ENCODE measurements at regions of chr12 and their contacts with region 1.

Region 1: GRCh38 chr12:108950991-108951739 is 69.7 kb downstream of the SVOP start:
- DNase-seq: peak; percentile 85
- H3K4me3 ChIP-seq: no peak overlapping the region
- H3K27ac ChIP-seq: no peak overlapping the region
- H3K4me1 ChIP-seq: peaks cover 0 to 9% (median 1%) of the 10 kb centered on the region in 4 donors
- H3K27me3 ChIP-seq: no peaks in the 10 kb centered on the region
- CTCF ChIP-seq: peak; percentile 81 to 92 (median 84)
- EP300 ChIP-seq: no peak
- POLR2A ChIP-seq: no peak

Region 2: GRCh38 chr12:108618079-108618952 is 332.8 kb before region 1 on chr12:
- intact Hi-C with region 1: loop called (anchors 5 kb)
- DNase-seq: peak; percentile 90
- H3K4me3 ChIP-seq: no peak overlapping the region
- H3K27ac ChIP-seq: no peak overlapping the region
- H3K4me1 ChIP-seq: peaks cover 0 to 12% (median 8%) of the 10 kb centered on the region in 4 donors
- H3K27me3 ChIP-seq: no peaks in the 10 kb centered on the region
- CTCF ChIP-seq: peak; percentile 85 to 96 (median 90)
- EP300 ChIP-seq: no peak
- POLR2A ChIP-seq: no peak

Region 3: DNA sequence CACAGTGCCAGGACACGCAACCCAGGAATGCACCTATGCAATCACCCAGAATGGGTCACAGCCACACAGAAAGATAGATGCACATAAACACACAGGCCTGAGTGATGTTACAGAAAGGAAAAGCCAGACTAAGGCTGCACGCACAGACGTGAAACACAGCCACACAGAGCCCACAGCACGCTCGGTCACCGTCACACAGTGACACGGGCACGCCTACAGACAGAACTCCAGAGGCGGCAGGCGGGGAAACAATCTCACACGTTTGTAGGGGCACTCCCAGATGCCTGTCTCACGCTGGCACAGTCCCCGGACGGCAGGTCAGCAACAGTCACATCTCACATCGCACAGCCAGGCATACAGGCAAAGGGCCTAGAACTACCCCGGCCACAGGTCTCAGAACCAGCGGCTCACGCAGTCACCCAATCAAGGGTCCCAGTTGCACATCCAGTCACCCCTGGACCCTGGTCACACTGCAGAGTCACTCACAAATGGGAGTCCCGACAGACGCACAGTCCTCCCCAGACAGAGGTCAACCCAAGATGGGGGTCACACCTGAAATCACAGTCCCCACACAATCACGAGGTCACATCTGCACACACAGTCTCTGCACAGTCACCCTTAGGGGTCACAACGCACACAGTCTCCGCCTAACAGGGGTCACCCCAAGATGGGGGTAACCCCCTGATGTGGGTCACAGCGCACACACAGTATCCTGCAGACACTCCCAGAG is 94.6 kb before region 1 on chr12:
- intact Hi-C with region 1: loop called (anchors 5 kb)
- DNase-seq: peak; percentile 87
- H3K4me3 ChIP-seq: peak overlapping the region; percentile 63 to 84 (median 78)
- H3K27ac ChIP-seq: peak overlapping the region; percentile 91 to 99 (median 96)
- H3K4me1 ChIP-seq: peaks cover 0 to 63% (median 55%) of the 10 kb centered on the region in 4 donors
- H3K27me3 ChIP-seq: no peaks in the 10 kb centered on the region
- CTCF ChIP-seq: no peak
- EP300 ChIP-seq: no peak
- POLR2A ChIP-seq: peak in 1 of 2 donors; percentile 22

Region 4: GRCh38 chr12:109052414-109053323 is 101.5 kb after region 1 on chr12 and contains the start of gene USP30:
- intact Hi-C with region 1: loop called (anchors 5 kb)
- DNase-seq: peak; percentile 93
- H3K4me3 ChIP-seq: peak within 1 kb of the TSS; percentile 74 to 99 (median 96)
- H3K27ac ChIP-seq: peak within 1 kb of the TSS; percentile 86 to 88 (median 86)
- H3K4me1 ChIP-seq: peaks cover 0 to 19% (median 15%) of the 10 kb centered on the region in 4 donors
- H3K27me3 ChIP-seq: no peaks in the 10 kb centered on the region
- CTCF ChIP-seq: no peak
- EP300 ChIP-seq: no peak
- POLR2A ChIP-seq: no peak
- total RNA-seq, gene USP30: 9.8 to 15.2 (median 13.1) TPM